ENCODE measurements at regions of chr17 and their contacts with region 1.

Region 1: DNA sequence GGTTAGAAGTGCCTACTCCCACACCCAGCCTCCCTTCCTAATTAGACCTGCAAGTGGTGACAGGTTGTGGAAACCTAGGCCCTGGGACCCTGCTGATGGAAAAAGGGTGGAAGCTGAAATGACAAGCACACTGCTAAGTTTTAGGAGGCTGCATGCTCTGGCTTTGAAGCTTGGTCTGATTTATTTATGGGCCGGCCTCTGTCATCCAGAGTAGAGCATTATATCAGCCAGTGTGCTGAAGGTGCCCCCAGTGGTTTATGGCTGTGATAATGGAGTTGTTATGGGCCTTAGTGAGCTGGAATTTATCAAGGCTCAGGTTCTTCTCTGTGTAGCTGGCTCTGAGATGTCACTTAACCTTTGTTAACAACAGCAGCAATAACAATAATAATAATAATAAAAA is 142.6 kb downstream of the UTP18 start:
- DNase-seq: no peak

Region 2: DNA sequence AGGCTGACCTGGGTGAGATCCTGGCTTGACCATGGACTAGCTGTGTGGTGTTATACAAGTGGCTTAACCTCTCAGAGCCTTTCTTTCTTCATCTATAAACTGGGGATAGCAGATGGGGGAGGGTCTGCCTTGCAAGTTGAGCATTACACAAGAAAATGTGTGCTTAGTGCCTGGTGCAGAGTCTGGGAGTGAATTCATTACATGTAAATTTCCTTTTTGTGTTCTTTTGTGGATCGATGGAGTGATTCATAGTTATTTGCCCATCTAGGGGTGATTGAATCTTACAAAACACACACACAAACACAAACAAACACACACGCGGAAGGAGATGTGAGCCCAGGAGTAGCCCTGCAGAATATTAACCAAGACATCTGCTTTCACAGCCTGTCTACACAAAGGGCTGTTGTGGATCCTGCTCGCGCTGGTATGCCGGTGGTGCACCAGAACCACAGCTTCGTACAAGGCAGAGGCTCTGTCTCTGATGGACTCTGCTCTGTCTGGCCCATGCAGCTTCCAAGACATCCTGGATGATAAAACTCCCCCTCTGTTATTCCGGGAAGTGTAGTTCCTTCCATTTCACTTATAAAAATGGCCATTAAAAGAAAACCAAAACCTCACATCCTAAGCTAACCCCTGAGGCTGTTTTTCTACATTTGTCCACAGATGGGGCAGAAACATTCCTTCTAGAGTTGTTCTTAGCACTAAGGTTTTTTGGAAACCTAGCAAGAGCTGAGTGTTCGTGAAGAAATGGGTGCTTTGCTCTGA is 56.5 kb before region 1 on chr17:
- intact Hi-C with region 1: no loop called
- DNase-seq: no peak

Region 3: GRCh38 chr17:51461578-51462004 is 58.7 kb after region 1 on chr17:
- intact Hi-C with region 1: loop called (anchors 10 kb)
- DNase-seq: no peak